ENCODE measurements at regions of chr11 and their contacts with region 1.

Region 1: DNA sequence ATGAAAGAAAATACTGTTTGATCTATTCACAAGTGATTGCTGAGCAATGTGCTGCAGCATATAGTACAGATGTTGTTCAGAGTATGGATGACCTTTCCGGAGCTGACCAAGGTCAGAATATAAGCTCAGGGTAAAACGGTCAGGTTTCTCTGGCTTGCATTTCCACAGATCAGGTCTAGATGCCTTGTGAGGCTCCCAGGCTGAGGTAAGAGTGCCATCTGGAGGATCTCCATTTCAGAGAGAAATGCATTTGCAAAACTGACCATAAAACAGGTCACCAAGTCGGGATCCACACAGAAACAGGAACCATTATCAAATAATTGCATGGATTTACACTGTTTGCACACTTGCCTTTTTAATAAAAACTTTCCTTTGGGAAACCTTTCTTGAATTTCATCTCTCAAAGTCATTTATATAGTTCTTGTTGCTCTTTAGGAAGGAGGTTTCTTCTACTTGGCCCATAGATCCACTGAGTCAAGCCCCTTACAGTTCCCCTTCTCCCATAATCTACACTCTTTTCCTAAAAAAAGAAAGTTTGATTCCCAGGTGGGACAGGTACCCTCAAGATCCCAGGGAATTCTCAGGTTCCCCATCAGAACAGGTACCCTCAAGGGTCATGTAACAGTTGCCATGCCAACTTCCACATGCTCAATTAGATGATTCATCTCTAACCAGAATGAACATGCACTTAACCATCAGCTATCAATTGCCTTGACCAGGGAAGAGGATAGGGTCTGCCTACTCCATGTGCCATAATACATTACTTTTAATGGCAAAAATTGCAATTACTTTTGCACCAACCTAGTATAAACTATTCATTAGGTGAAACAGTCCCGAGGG is 25.0 kb upstream of the TMPRSS5 start:
- DNase-seq: peak; percentile 45
- H3K4me3 ChIP-seq: no peak overlapping the region
- H3K27ac ChIP-seq: no peak overlapping the region
- H3K4me1 ChIP-seq: no peaks in the 10 kb centered on the region
- H3K27me3 ChIP-seq: no peaks in the 10 kb centered on the region
- CTCF ChIP-seq: peak; percentile 12 to 68 (median 56)
- POLR2A ChIP-seq: no peak

Region 2: DNA sequence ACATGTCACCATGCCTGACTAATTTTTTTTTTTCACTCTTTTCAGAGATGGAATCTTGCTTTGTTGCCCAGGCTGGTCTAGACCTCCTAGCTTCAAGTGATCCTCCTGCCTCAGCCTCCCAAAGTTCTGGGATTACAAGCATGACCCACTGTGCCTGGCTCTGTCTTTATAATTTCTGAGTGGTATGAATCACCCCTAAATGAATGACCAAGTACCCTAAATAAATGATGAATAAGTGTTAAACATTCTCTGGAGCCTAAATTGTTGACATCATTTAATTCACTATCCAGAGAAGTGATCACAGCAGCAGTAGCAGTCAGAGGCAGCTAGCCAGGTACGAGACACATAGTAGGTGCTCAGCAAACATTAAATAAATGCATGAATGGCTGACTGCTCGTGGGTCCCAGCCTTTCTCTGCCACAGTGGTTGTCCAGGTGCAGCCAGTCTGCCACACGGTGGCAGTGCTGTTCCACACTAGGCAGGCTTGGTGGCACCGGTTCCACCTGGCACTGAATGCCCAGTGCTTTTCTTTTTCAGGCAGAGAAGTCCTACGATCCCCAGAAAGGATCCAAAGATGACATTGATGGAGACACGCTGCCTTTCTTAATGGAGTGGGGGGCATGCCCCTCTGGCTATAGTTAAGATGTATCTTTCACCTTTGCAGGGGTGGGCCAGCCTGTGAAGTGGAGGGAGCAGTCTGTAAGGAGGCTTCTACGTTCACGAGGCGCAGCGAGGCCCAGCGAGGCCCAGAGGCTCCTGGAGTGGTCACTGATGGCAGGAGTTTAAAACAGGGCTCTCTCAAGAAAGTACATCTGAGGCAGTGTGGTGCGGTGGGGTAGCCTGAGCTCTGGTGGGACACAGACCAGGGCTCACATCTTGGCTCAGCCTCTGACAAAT is 425.4 kb before region 1 on chr11:
- intact Hi-C with region 1: loop called (anchors 2 kb)
- DNase-seq: peak; percentile 76
- H3K4me3 ChIP-seq: no peak overlapping the region
- H3K27ac ChIP-seq: no peak overlapping the region
- H3K4me1 ChIP-seq: no peaks in the 10 kb centered on the region
- H3K27me3 ChIP-seq: no peaks in the 10 kb centered on the region
- CTCF ChIP-seq: peak; percentile 68 to 94 (median 92)
- POLR2A ChIP-seq: no peak

Region 3: GRCh38 chr11:113628912-113629311 is 102.2 kb before region 1 on chr11:
- intact Hi-C with region 1: no loop called
- DNase-seq: no peak
- H3K4me3 ChIP-seq: no peak overlapping the region
- H3K27ac ChIP-seq: no peak overlapping the region
- H3K4me1 ChIP-seq: no peaks in the 10 kb centered on the region
- H3K27me3 ChIP-seq: no peaks in the 10 kb centered on the region
- CTCF ChIP-seq: no peak
- POLR2A ChIP-seq: no peak